Right ventricle myocardium inferior (tissue), 1 donor: ENCODE measurements at regions of chr11 and their contacts with region 1.

Region 1: GRCh38 chr11:13343931-13344717 is 66.5 kb downstream of the BMAL1 start:
- DNase-seq: no peak
- ATAC-seq: peak; percentile 35

Region 2: DNA sequence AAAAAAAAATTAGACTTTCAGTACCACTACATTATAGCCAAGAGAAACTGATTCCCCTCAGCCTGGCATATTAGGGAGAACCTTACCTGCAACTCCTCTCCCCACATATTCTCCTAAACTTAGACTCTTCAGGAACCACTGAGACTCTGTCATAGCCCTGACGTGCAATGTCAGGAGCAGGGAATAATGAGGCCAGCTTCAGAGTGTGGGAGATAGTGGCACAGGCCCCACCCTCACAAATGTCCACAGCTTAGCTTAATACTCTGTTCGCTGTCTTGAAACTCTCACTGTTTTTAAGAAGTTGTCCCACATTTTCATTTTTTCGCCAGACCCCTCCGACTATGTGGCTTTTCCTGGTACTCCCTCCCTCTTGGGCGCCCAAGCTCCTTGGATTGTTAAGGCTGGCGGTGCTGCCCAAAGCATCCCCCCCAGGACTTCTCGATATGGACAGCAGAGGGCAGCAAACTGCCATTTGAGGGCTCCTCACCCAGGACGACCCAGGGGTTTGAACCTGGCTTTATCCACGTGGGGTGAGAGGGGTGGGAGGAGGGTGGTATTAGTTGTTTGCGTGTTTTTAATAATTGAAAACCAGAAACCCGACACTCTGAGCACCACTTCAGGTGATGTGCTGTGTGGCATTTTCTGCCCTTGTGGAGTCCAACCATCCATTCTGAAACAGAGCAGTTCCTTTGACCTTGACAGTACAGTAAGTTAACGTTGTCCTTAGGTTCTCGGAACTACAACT is 380.2 kb before region 1 on chr11:
- intact Hi-C with region 1: loop called (anchors 10 kb)
- DNase-seq: no peak
- ATAC-seq: peak; percentile 80

Region 3: DNA sequence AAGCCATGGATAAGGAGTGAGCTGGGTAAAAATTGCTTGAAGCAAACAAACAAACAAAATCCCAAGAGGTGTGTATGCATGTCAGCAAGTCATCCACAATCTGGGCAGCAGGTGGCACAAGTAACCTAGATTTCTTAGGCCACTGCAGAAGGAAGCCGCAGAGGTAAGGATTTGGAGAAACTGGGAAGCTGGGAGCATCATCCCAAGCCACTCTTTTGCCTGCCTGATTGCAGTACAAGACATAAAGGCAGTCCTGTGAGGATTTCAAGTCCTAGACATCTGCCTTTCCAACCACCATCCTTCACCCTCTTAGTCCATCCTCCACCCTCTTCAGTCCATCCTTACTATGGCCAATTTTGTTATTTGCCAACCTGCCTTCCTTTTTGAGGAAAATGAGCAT is 133.7 kb before region 1 on chr11:
- intact Hi-C with region 1: loop called (anchors 1 kb)
- DNase-seq: no peak
- ATAC-seq: peak; percentile 64

Region 4: DNA sequence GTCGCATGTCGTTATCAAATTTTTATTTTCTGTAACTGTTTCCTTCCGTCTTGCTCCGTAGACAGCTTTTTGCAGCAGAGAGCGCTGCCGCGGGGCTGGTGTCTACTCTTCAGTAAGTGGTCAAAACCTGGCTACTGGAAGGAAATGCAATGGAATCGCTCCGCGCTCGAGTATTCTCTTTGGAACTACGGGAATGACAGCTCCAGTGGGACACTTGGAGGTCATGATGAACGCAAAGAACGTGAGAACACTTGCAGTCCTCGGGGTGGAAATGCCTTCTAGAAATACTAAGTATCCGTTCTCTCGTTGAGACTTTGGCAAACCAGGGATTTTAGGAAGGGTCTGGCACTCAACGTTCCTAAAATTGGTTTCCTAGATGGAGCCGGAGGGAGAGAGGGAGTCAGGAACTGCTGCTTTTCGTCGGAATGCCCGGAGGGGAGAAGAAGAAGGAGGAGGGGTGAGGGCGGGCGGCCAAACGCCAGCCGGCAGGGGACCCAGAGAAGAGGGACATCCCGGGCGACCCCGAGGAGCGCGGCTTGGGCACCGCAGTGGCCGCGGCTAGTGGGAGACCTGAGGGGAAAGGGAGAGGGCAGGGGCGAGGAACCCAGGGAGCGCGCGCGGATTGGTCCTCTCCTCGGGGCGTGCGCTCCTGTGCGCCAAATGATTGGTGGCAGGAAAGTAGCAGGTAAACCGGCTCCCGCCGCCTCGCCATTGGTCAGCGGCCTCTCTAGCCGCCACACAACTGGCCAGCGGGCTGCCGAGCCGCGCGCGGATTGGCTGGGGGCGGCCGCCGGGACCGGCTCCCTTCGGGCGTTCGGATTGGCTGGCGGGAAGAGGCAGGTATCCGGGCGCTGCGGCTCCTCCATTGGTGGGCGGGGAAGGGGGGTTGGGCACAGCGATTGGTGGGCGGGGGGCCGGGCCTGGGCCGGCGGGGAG is 67.0 kb before region 1 on chr11:
- intact Hi-C with region 1: loop called (anchors 2 kb)
- DNase-seq: peak; percentile 99
- ATAC-seq: peak; percentile 98